Naive thymus-derived CD4-positive, alpha-beta T cell (primary cell): ENCODE measurements at regions of chr17 and their contacts with region 1.

Region 1: DNA sequence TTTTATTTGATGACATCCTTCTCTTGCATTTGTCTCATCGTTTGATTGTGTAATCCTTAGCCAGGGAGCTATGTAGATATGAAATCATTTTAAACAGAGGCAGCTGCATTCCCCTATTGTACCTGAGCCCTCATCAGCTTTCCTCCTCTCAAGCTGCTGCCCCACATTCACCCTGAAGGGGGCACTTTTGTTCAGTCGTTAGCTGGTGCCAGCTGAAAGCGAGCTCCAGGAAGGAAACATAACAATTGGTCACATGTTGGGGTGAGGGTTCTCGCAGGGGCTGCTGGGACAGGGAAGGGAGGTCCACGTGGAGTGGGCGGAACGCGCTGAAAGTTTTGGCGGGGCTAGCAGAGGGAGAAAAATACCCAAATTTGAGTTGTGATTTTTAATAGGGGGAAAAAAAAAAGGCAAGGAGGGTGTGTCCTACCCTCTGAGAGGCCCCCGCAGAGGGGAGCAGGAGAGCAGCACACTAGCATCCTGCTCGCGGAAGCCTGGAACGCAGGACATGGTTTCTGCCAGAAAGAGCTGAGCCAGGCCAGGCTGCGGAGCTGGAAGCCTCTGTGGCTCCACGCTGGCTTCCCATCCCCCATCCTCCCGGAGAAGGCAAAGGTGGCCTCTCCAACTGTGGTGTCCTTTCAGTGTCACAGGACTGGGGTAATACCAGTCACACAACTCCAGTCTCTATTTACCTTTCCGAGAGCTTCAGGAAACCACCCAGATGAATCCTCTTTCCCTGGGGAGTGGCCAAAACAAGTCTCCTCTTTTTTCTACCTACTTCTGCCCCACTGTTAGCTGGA is 8.5 kb upstream of the MSL1 start:
- DNase-seq: peak; percentile 69 to 95 (median 93)
- ATAC-seq: peak; percentile 89
- H3K4me3 ChIP-seq: peak overlapping the region; percentile 58
- H3K4me3 Mint-ChIP-seq: peak overlapping the region; percentile 75 to 98 (median 85)
- H3K27ac ChIP-seq: peak overlapping the region; percentile 69
- H3K27ac Mint-ChIP-seq: peak overlapping the region; percentile 57 to 100 (median 91)
- H3K4me1 ChIP-seq: peaks cover 52 to 55% of the 10 kb centered on the region in 2 donors
- H3K4me1 Mint-ChIP-seq: peaks cover 41 to 67% (median 56%) of the 10 kb centered on the region in 7 donors
- H3K27me3 ChIP-seq: no peaks in the 10 kb centered on the region
- H3K27me3 Mint-ChIP-seq: no peaks in the 10 kb centered on the region

Region 2: GRCh38 chr17:39653662-39654331 is 459.5 kb before region 1 on chr17:
- CTCF ChIA-PET with region 1: no interaction called
- POLR2A ChIA-PET with region 1: no interaction called
- intact Hi-C with region 1: no loop called
- DNase-seq: peak; percentile 58 to 83 (median 71)
- ATAC-seq: peak; percentile 91
- H3K4me3 ChIP-seq: no peak overlapping the region
- H3K4me3 Mint-ChIP-seq: no peak overlapping the region
- H3K27ac ChIP-seq: peak overlapping the region; percentile 36
- H3K27ac Mint-ChIP-seq: peak overlapping the region in 5 of 9 donors; percentile 21 to 74 (median 51)
- H3K4me1 ChIP-seq: peaks cover 4 to 23% of the 10 kb centered on the region in 2 donors
- H3K4me1 Mint-ChIP-seq: peaks cover 24 to 74% (median 63%) of the 10 kb centered on the region in 7 donors
- H3K27me3 ChIP-seq: no peaks in the 10 kb centered on the region
- H3K27me3 Mint-ChIP-seq: no peaks in the 10 kb centered on the region

Region 3: GRCh38 chr17:40026816-40027613 is 86.3 kb before region 1 on chr17:
- CTCF ChIA-PET with region 1: interaction called, 15 read pairs
- POLR2A ChIA-PET with region 1: interaction called, 5 read pairs
- intact Hi-C with region 1: loop called in 1 of 2 experiments (anchors 1 kb)
- DNase-seq: peak; percentile 54 to 81 (median 69)
- ATAC-seq: peak; percentile 91
- H3K4me3 ChIP-seq: no peak overlapping the region
- H3K4me3 Mint-ChIP-seq: peak overlapping the region in 4 of 10 donors; percentile 14 to 72 (median 36)
- H3K27ac ChIP-seq: no peak overlapping the region
- H3K27ac Mint-ChIP-seq: peak overlapping the region in 2 of 9 donors; percentile 19 to 42
- H3K4me1 ChIP-seq: peaks cover 6 to 26% of the 10 kb centered on the region in 2 donors
- H3K4me1 Mint-ChIP-seq: peaks cover 10 to 24% (median 22%) of the 10 kb centered on the region in 7 donors
- H3K27me3 ChIP-seq: no peaks in the 10 kb centered on the region
- H3K27me3 Mint-ChIP-seq: no peaks in the 10 kb centered on the region

Region 4: DNA sequence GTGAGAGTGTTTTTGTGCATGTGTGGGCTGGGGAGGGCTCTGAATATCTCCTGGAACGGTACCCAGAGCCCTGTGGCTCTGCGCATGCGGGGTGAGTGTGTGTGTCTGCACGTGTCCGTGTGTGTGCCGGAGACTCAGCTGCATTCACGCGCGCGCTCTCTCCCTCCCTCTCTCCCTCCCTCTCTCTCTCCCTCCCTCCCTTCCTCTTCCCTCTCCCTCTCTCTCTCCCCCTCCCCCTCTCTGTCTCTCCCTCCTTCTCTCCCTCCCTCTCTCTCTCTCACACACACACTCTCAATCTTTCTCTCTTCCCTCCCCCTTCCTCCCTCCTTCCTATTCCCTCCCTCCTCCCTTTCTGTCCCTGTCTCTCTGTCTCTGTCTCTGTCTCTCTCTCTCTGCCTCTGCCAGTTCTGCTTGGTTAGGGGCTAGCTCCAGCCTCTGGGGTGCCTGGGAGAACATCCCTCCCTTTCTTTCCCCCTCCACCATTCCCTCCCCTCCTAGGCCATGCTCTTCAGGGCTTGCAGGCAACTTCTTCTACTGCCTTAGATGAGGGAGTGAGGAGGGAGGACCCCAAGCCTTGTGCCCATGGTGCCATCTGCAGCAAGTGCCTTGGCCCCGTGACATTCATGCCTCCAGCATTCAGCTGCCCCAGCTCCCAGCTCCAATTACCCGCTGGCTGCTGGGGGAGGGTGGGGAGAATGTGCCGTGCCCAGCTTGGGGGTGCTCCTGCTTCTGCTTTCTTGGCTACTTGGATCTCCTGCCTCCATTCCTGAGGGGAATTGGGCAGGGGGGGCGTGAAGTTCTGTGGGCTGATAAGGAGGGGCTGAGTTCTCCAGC is 44.2 kb before region 1 on chr17:
- CTCF ChIA-PET with region 1: interaction called, 127 read pairs
- POLR2A ChIA-PET with region 1: interaction called, 60 read pairs
- intact Hi-C with region 1: loop called in 1 of 2 experiments (anchors 1 kb)
- DNase-seq: peak; percentile 60 to 84 (median 75)
- ATAC-seq: peak; percentile 79
- H3K4me3 ChIP-seq: peak overlapping the region; percentile 45
- H3K4me3 Mint-ChIP-seq: peak overlapping the region; percentile 85 to 94 (median 90)
- H3K27ac ChIP-seq: peak overlapping the region; percentile 75
- H3K27ac Mint-ChIP-seq: peak overlapping the region; percentile 83 to 96 (median 95)
- H3K4me1 ChIP-seq: peaks cover 42 to 71% of the 10 kb centered on the region in 2 donors
- H3K4me1 Mint-ChIP-seq: peaks cover 40 to 93% (median 69%) of the 10 kb centered on the region in 7 donors
- H3K27me3 ChIP-seq: no peaks in the 10 kb centered on the region
- H3K27me3 Mint-ChIP-seq: peaks cover 0 to 12% (median 0%) of the 10 kb centered on the region in 5 donors

Region 5: GRCh38 chr17:40139566-40140058 is 26.3 kb after region 1 on chr17:
- CTCF ChIA-PET with region 1: interaction called, 21 read pairs
- POLR2A ChIA-PET with region 1: interaction called, 52 read pairs
- intact Hi-C with region 1: loop called (anchors 1 kb)
- DNase-seq: peak in 4 of 9 donors; percentile 8 to 25 (median 10)
- ATAC-seq: peak; percentile 8
- H3K4me3 ChIP-seq: peak overlapping the region; percentile 80
- H3K4me3 Mint-ChIP-seq: peak overlapping the region; percentile 83 to 97 (median 93)
- H3K27ac ChIP-seq: peak overlapping the region; percentile 96
- H3K27ac Mint-ChIP-seq: peak overlapping the region; percentile 85 to 100 (median 98)
- H3K4me1 ChIP-seq: peaks cover 21 to 28% of the 10 kb centered on the region in 2 donors
- H3K4me1 Mint-ChIP-seq: peaks cover 14 to 62% (median 44%) of the 10 kb centered on the region in 7 donors
- H3K27me3 ChIP-seq: no peaks in the 10 kb centered on the region
- H3K27me3 Mint-ChIP-seq: peaks cover 0 to 2% (median 0%) of the 10 kb centered on the region in 5 donors

Region 6: GRCh38 chr17:40177275-40177874 is 64.1 kb after region 1 on chr17 and contains the start of gene RAPGEFL1:
- CTCF ChIA-PET with region 1: interaction called, 14 read pairs
- POLR2A ChIA-PET with region 1: interaction called, 5 read pairs
- intact Hi-C with region 1: loop called (anchors 2 kb)
- DNase-seq: peak; percentile 58 to 81 (median 72)
- ATAC-seq: peak; percentile 98
- H3K4me3 ChIP-seq: peak within 1 kb of the TSS; percentile 53
- H3K4me3 Mint-ChIP-seq: peak within 1 kb of the TSS; percentile 62 to 83 (median 69)
- H3K27ac ChIP-seq: peak within 1 kb of the TSS; percentile 61
- H3K27ac Mint-ChIP-seq: peak within 1 kb of the TSS in 5 of 9 donors; percentile 46 to 87 (median 72)
- H3K4me1 ChIP-seq: peaks cover 5% of the 10 kb centered on the region in 2 donors
- H3K4me1 Mint-ChIP-seq: peaks cover 6 to 12% (median 9%) of the 10 kb centered on the region in 7 donors
- H3K27me3 ChIP-seq: no peaks in the 10 kb centered on the region
- H3K27me3 Mint-ChIP-seq: no peaks in the 10 kb centered on the region
- total RNA-seq, gene RAPGEFL1: 5.0 to 10.7 (median 6.3) TPM